Left cardiac atrium (tissue), 4 donors: ENCODE measurements at regions of chr13 and their contacts with region 1.

Region 1: GRCh38 chr13:35953537-35954206 is 177.5 kb downstream of the DCLK1 start:
- DNase-seq: peak; percentile 70
- ATAC-seq: peak; percentile 91

Region 2: DNA sequence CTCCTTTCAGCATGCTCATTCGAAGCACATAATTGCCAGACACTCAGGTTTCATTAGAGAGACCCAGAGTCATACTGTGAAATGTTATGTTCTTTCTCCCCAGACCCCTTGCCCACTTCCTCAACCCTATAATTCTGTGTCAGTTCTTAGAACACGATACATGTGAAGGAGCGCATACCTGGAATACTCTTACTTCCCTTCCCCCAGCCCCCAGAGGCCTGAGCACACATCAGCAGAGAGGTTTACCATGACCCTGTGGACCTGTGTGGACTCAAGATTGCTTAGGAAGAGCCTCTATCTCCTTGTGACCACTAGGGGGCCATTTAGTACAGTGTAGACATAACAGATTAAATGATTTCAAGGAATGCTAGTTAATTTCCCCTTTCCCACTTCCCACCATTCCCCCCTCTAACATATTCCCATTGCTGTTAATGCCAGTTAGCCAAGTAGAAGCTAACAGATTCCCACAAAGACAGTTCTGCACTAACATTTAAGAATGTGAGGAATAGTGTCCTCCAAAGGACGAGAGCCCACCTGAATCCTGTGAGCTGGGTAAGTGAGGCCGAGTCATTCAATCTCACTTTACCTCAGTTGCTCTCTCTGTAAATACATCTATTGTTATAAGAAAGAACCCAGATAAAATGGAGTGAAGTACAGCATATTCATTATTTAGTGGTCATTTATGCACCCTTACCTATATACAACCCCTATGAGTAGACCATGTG is 323.0 kb before region 1 on chr13:
- intact Hi-C with region 1: loop called in 1 of 2 experiments (anchors 5 kb)
- DNase-seq: no peak
- ATAC-seq: peak; percentile 41 to 73

Region 3: DNA sequence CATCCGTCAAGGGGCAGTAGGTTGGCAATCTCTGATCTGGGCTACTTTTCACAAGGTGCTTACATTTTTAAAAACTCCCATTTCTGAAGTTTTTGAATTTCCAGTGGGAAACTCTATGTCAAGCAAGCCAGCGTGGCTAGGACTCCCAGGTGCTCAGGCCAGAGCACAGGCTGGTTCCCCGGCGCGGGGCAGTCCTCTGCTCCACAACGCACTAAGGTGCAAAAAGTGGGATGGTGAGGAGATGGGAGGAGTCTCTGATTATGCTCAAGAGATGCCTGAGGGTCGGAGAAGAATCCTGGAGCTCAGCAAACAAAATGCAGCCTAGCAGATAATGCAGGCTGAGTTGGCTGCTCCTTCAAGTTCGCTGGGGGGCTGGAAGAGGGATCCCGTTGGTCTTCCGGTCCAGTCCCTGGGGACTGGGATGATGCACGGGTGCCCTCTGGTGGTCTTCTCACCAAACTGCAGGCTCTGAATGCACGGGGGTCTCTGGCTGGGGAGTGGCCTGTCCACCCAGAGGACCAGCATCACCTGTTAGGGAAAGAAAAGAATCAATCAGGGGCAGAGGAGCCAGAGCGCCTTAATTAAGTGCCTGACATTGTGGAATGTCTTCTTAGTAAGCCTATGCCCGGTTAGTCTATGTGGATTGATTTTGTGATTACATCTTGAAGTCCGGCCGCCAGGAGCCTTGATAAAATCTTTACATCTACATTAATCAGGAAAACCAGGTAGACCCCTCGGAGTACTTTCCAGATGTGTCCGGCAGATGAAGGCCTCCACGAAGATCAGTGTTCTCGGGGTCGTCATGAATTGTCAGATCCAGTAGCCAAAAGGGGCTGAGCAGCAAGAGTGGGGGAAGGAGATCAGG is 232.8 kb before region 1 on chr13:
- intact Hi-C with region 1: loop called in 1 of 2 experiments (anchors 5 kb)
- DNase-seq: peak; percentile 52
- ATAC-seq: peak; percentile 42 to 54

Region 4: DNA sequence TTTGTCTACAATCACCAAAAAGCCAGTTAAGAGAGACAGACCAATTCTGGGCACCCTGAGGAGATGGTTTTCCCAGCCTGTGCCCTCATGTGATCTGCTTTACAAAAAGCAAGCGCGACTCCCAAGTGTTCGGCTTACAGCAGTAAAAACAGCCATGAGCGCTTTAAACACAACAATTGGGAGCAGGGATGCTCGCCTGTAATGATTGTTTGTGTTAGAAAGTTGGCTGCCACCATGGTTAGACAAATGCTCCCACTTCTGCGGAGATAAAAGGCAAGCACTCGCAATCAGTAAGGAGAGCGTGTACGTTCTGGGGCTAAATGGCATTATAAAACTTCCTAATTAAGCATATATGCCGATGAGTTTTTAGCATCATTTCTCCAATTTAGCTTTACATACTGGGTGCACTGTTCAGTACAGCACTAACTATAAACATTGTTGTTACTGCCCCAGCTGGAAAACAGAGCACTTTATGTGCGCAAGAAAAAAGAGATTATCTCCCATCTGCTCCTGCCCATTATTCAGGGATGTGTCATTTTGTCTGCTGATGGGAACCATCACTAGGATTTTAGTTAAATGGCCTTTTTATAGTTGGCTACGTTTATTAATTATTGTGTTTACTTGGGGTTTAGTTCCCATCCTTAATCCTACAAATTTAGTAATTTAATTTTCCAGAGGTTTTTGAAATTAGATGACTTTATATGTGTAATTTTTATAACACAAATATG is 167.9 kb before region 1 on chr13:
- intact Hi-C with region 1: no loop called
- DNase-seq: no peak
- ATAC-seq: no peak

Region 5: GRCh38 chr13:35824395-35824794 is 129.3 kb before region 1 on chr13:
- intact Hi-C with region 1: loop called in 1 of 2 experiments (anchors 5 kb)
- DNase-seq: no peak
- ATAC-seq: no peak

Region 6: DNA sequence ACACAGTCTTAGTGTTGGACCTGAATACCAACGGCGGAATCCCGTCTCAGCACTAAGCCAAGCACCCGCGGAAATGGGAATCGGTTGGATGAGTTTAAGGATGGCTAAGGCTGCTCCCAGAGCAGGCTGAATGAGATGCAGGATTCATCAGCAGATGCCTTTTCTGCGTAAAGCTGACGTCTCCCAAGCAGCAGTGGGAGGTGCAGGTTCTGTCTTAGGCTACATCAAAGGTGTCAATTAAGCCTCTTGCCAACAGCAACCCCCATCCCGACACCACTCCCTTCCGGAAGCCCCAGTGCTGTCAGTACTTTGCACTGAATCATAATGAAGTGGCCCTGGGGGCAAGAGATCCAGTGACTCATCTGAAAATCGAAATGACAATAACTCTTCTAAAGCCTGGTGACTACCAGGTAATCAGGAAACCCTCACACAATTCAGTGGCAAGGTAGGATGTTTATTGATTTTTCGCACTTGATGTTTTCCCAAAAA is 98.1 kb before region 1 on chr13:
- intact Hi-C with region 1: no loop called
- DNase-seq: no peak
- ATAC-seq: peak in 1 of 2 donors; percentile 54

Region 7: DNA sequence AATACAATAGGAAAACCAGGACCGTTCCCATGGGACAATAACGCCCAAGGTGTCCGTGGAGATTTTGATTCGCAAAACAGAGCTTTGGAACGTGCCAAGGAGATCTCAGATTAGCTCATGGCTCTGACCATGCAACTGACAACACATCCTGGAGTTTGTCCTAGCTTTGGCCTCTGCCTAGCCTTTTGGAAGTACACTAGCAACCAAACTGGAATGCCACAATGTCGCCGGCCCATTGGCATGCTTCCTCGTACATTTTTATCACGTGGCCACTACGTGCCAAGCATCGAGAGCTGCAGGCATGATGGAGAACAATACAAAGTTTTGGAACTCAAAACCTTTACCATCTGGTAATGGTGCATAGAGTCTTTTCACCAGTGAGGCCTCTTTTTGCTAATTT is 79.0 kb before region 1 on chr13:
- intact Hi-C with region 1: loop called in 1 of 2 experiments (anchors 5 kb)
- DNase-seq: peak; percentile 30
- ATAC-seq: peak; percentile 79 to 84

Region 8: DNA sequence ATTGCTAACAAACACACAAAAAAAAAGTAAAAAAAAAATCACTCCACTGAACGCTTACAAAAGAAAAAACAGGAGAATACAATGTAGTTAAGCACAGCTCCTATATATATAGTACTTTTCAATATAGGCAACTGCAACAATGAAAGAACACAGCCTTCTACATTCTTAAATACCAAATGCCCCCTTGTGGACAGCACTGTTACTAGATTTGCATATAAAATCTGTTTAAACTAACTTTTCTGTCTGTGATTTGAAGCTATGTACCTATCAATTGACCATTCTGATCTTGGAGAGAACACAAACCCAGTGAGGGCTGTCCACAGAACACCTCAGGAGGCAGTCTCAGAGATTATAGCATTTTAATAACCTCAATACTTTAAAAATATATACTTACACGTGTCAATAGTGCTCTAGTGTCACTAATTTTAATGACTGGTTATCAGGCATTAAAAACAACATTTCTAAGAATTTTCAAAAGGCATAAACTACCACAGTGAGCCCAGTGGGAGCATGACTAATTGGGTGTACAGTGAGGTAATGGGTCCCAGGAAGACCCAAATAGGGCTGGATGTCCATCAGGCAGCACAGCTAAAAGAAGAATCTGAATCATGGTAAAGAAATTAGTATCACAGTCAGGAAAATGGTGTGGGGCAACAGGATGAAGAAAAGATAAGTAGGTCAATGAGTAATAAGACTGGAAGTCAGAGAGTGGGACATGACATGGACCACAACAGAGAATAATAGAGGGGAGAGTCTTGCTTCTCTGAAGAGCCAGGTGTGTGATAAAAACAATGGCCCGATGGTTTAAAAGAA is 321.7 kb after region 1 on chr13:
- intact Hi-C with region 1: no loop called
- DNase-seq: no peak
- ATAC-seq: peak; percentile 30 to 52